Activated T-helper 2 cell treated with anti-CD3 and anti-CD28 coated beads, Interferon-gamma antibody, Interleukin-2, Interleukin-4, amounts not matched to agents 10 μg/mL and 5 μg/mL and 100 μg/mL, durations not matched to agents 14 hours and 24 hours and 36 hours (primary cell): ENCODE measurements at regions of chr1 and their contacts with region 1.

Region 1: DNA sequence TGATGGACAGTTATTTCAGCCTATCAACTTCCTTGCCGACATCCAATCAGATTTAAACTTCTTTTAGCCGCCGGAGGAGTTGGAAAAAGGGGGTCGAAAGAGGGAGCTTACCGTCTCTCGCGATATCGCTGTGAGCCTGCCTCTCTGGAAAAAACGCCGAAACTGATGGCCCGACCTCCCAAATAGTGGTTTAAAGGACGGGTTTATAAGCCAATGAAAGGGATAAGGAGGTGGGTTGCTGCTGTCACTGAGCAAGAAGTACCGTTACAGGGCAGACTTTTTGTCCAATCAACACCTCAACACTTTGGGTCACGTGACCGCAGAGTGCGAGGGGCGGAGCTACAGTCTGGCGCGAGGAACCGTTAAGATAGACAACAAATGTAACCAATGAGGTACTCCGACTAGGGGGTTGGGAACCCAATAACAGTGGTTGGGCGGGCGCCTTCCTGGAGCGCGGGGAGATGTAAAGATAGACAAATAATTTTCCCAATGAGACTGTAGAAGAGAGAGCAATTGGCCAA is at the start of gene RBM15:
- DNase-seq: peak; percentile 98
- H3K4me3 Mint-ChIP-seq: no peak within 1 kb of the TSS
- H3K27ac Mint-ChIP-seq: no peak within 1 kb of the TSS
- H3K4me1 Mint-ChIP-seq: peaks cover 52% of the 10 kb centered on the region
- H3K27me3 Mint-ChIP-seq: no peaks in the 10 kb centered on the region
- total RNA-seq, gene RBM15: 55.5 TPM in 2 replicates

Region 2: DNA sequence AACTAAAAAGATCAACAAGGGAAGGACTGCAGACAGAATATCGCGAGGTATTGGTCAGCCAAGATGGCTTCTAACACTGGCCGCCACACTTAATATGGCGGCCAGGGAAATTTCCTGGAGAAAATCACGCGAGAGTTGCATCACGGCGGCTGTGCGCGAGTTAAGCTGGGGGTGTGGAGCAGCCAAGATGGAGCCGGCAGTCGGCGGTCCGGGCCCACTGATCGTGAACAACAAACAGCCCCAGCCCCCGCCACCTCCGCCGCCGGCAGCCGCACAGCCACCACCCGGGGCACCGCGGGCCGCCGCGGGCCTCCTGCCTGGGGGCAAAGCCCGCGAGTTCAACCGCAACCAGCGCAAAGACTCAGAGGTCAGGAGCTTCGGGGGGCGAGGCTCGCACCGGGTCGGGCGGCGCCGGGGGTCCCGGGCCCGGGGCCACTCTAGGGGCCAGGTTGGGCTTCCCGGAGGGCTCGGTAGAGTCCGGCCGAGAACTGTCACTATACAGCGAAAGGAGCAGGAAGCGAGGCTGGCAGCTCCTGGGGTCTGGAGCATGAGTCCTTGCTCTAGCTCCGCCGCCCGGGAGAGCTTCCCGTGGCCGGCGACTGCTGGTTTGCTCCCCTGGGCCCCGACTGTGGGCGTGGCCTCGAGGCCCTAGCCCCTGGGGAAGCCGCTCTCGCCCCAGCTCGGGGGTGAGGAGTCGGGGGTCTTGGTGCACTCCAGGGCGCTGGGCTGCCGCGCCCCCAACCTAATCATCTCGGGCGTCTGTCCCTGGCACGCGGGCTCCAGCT is 304.3 kb before region 1 on chr1 and contains the start of gene STRIP1:
- intact Hi-C with region 1: loop called (anchors 2 kb)
- DNase-seq: peak; percentile 92
- H3K4me3 Mint-ChIP-seq: peak within 1 kb of the TSS; percentile 90
- H3K27ac Mint-ChIP-seq: peak within 1 kb of the TSS; percentile 76
- H3K4me1 Mint-ChIP-seq: peaks cover 40% of the 10 kb centered on the region
- H3K27me3 Mint-ChIP-seq: no peaks in the 10 kb centered on the region
- total RNA-seq, gene STRIP1: 37.4 and 39.1 TPM in 2 replicates

Region 3: GRCh38 chr1:110309767-110310166 is 29.2 kb before region 1 on chr1:
- intact Hi-C with region 1: no loop called
- DNase-seq: no peak
- H3K4me3 Mint-ChIP-seq: no peak overlapping the region
- H3K27ac Mint-ChIP-seq: no peak overlapping the region
- H3K4me1 Mint-ChIP-seq: no peaks in the 10 kb centered on the region
- H3K27me3 Mint-ChIP-seq: peaks cover 3% of the 10 kb centered on the region

Region 4: DNA sequence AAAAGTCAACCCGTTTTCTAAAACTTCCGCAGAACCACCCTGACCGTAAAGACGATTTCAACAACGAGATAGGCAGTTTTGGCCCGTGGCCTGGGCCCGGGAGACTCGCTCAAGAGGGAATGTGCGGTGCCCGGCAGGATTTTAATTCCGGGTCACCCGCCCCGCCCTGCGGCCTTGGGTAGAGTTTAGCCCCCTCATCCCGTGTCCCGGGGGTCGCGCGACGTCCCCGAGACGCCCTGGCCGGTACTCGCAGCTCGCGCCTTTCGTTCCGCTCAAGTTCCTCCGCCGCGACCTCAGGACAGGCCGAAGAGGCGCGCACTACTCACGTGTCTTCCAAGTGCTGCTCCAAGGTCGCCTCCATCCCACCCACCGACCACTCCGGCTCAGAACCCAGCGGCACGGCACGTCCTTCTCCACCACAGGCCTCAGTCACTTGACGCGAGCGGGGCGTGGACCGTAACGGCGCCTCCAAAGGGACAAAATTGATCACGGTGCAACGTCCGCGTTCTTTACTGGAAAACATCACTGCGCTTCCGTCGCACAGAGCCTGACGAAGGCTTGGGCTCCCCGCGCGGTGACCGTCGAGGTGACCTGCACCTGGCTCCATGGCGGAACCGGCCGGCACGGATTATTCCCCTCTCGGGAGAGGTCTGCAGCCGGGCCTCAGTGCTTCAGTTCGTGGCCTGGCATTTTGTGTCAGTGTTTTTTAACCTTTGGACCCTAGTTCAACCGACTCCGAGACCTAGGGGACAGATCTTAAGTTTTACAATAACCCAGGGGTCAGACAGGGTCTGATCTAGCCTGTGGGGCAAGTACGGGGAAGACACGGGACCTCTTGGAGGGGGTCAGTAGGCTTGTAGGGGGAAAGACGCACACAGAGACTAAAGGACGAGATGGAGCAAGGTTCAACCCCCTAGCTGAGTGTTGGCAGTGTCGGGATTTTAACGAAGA is 68.6 kb after region 1 on chr1 and contains the start of gene LAMTOR5:
- intact Hi-C with region 1: loop called (anchors 1 kb)
- DNase-seq: peak; percentile 90
- H3K4me3 Mint-ChIP-seq: peak within 1 kb of the TSS; percentile 96
- H3K27ac Mint-ChIP-seq: peak within 1 kb of the TSS; percentile 97
- H3K4me1 Mint-ChIP-seq: peaks cover 16% of the 10 kb centered on the region
- H3K27me3 Mint-ChIP-seq: no peaks in the 10 kb centered on the region
- total RNA-seq, gene LAMTOR5: 170 and 171 TPM in 2 replicates

Region 5: GRCh38 chr1:110580244-110580643 is 241.3 kb after region 1 on chr1:
- intact Hi-C with region 1: no loop called
- DNase-seq: no peak
- H3K4me3 Mint-ChIP-seq: no peak overlapping the region
- H3K27ac Mint-ChIP-seq: no peak overlapping the region
- H3K4me1 Mint-ChIP-seq: no peaks in the 10 kb centered on the region
- H3K27me3 Mint-ChIP-seq: peaks cover 33% of the 10 kb centered on the region